Right ventricle myocardium inferior (tissue), 1 donor: ENCODE measurements at regions of chr17 and their contacts with region 1.

Region 1: DNA sequence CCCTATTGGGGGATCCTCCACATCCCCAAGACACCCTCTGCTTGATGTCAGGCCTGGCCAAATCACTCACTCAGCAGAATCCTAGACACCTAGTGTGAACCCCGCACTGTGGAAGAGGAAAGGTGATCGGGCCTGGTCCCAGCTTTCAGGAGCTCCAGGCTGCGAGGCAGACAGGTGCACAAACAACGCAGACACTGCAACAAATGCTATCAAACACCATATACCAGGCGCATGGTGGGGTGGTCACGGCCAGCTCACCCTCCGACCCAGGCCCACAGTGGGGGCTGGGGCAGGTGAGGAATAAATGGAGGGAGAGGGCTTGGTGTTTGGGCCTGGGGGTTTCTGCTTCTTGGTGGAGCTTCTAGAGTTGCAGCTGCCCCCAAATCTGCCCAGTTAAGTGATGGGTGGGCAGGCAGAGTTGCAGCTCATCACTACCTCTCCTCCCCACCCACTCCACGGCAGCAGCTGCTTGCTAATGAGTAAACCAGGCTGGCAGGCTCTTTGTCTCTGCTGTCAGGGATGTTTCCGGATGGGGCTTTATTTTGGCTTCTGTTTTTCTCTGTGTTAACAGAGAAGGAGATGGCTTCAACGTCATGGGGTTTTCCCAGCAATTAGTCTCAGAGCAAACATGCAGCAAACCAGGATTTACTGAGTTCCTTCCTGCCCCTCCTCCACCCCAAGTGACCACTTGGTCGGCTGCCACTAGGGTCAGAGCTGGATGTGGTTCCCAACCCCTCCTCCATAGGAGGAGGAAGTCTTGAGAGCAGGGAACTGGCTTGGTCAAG is 46.6 kb downstream of the PECAM1 start:
- DNase-seq: peak; percentile 87
- ATAC-seq: peak; percentile 81

Region 2: GRCh38 chr17:64326395-64327054 is 17.5 kb before region 1 on chr17:
- intact Hi-C with region 1: loop called (anchors 1 kb)
- DNase-seq: peak; percentile 89
- ATAC-seq: peak; percentile 88